ENCODE measurements at regions of chr3 and their contacts with region 1.

Region 1: GRCh38 chr3:25789596-25790556 is at the start of gene OXSM:
- DNase-seq: peak in 1 of 2 donors; percentile 89
- H3K4me3 ChIP-seq: peak within 1 kb of the TSS; percentile 61 to 66
- H3K27ac ChIP-seq: peak within 1 kb of the TSS; percentile 81
- H3K4me1 ChIP-seq: peaks cover 30% of the 10 kb centered on the region
- H3K27me3 ChIP-seq: no peaks in the 10 kb centered on the region
- CTCF ChIP-seq: no peak
- POLR2A ChIP-seq: no peak
- total RNA-seq, gene OXSM: 5.9 TPM

Region 2: GRCh38 chr3:25664810-25665314 is 125.0 kb before region 1 on chr3 and contains the start of gene TOP2B:
- intact Hi-C with region 1: loop called (anchors 10 kb)
- DNase-seq: peak in 1 of 2 donors; percentile 98
- H3K4me3 ChIP-seq: peak within 1 kb of the TSS; percentile 74 to 93
- H3K27ac ChIP-seq: peak within 1 kb of the TSS; percentile 97
- H3K4me1 ChIP-seq: peaks cover 35% of the 10 kb centered on the region
- H3K27me3 ChIP-seq: no peaks in the 10 kb centered on the region
- CTCF ChIP-seq: no peak
- POLR2A ChIP-seq: peak in 1 of 2 donors; percentile 85
- total RNA-seq, gene TOP2B: 88.1 TPM

Region 3: DNA sequence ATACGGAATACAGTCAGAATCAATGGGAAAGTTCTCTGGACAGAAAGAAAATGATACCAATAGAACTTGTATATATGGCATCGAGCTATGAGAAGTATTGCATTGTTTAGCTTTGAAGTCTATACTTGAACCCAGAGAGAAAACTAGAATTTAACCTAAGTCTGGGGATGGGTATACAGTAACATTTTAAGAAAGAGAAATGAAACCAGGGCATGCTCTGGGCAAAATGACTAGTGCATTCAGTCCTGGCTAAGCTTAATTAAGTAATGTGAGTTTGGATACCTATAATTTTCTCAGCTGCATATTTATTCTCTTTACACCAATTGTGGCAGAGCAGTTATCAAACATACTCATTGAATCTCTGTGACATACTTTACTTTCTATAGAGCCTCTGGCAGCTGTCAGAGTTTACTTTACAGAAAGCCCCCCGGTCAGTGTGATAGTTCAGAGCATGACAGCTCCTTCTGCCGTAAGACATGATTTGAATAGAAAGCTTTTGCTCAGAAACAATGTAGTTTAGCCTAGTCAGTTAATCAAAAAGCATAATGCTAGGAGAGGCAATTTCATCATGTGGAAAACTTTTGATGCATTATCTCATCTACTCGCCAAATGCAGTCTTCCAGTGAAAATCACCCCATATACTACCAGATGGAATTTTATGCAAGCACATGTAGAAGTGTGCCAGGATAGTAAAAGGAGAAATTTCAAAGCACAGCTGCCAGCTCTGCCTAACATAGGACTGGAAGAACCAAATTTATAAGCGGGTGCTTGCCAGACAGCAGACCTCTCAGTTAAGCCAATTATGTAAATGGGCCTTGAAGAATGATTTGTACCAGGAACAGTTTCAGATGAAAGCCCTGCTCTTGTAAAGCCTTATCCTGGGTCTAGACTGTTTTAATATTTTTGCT is 40.8 kb after region 1 on chr3:
- intact Hi-C with region 1: no loop called
- DNase-seq: no peak
- H3K4me3 ChIP-seq: no peak overlapping the region
- H3K27ac ChIP-seq: no peak overlapping the region
- H3K4me1 ChIP-seq: peaks cover 7% of the 10 kb centered on the region
- H3K27me3 ChIP-seq: no peaks in the 10 kb centered on the region
- CTCF ChIP-seq: no peak
- POLR2A ChIP-seq: no peak

Region 4: DNA sequence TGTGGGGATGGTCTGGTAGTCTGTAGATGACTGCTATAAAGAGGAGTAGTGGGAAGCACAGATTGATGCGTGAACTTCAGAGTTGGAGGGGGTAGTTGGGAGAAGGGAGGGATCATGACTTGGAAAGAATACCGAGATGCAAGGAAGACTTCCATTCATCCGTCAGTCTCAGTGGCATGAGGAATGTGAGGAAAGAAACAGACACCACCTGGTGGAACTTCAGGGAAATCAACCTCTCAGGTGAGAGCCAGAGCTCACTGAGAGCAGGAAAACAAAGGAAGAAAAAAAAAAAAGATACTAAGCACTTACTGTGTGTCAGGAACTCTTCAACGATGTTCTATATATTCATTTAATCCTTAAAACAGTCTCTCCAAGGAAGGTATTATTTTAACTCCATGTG is 172.4 kb after region 1 on chr3:
- intact Hi-C with region 1: no loop called
- DNase-seq: no peak
- H3K4me3 ChIP-seq: no peak overlapping the region
- H3K27ac ChIP-seq: no peak overlapping the region
- H3K4me1 ChIP-seq: no peaks in the 10 kb centered on the region
- H3K27me3 ChIP-seq: no peaks in the 10 kb centered on the region
- CTCF ChIP-seq: no peak
- POLR2A ChIP-seq: no peak